ENCODE measurements at regions of chr18 and their contacts with region 1.

Region 1: GRCh38 chr18:47143899-47144485 is 6.3 kb downstream of the HDHD2 start:
- DNase-seq: no peak
- ATAC-seq: no peak
- H3K4me3 ChIP-seq: no peak overlapping the region
- H3K27ac ChIP-seq: no peak overlapping the region
- H3K4me1 ChIP-seq: peaks cover 41% of the 10 kb centered on the region
- H3K27me3 ChIP-seq: no peaks in the 10 kb centered on the region
- CTCF ChIP-seq: no peak

Region 2: DNA sequence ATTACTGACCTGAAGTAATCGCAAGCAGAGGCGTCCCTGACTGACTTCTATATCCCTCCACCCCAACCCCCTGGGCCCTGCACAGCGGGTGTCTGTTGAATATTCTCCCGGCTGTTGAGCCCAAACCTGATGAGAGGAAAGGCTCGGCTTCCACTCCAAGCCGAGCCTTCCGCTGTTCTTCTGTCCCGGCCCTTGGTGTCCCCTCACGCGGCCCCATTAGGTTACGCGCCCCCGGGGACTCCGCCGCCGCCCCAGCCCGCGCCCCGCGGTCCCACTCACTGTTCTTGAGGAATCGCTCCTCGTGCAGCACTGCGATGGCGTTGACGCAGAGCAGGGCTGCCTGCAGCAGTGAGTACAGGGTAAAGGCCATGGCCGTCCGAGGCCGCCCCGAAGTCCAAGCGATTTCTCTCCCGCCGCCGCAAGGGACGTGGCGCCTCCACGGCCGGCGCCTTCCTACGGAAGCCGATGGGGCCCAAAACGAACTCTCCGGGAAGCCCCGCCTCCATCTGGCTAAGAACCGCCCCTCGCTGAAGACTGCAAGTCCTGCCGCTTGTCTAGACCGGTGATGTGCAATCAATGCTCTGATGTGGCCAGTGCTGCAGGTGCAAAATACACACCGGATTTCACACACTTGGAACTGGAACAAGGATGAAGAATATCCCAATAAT is 32.0 kb after region 1 on chr18 and contains the start of gene IER3IP1:
- intact Hi-C with region 1: loop called in 1 of 2 experiments (anchors 5 kb)
- DNase-seq: peak; percentile 94 to 96
- ATAC-seq: peak; percentile 97 to 99 (median 98)
- H3K4me3 ChIP-seq: peak within 1 kb of the TSS; percentile 97
- H3K27ac ChIP-seq: peak within 1 kb of the TSS; percentile 86
- H3K4me1 ChIP-seq: peaks cover 18% of the 10 kb centered on the region
- H3K27me3 ChIP-seq: no peaks in the 10 kb centered on the region
- CTCF ChIP-seq: peak; percentile 5
- total RNA-seq, gene IER3IP1: 9.3 to 12.6 (median 11.0) TPM

Measured in psoas muscle (tissue), 8 donors.